ENCODE measurements at regions of chr16 and their contacts with region 1.

Region 1: DNA sequence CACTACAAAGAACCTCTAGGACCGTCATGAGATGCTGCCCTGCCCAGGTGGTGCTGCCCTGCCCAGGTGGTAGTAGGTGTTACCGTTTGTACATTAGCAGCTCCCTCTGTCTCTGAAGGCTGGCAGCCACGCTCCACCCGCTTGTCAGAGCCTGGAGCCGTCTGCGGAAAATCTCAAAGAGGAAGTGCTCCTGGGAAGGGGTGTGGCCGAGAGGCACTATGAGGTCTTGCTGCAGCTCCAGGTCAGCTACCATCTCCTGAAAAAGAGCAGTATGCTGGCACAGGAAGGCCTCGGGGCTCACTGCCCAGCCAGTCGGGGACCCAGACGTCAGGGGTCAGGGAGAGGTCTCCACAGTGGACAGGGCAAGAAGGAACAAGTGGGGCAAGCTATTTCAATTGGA is 28.3 kb downstream of the ZNF276 start:
- DNase-seq: peak in 3 of 5 donors; percentile 28 to 40 (median 39)
- ATAC-seq: peak in 3 of 4 donors; percentile 32 to 42 (median 40)
- H3K4me3 ChIP-seq: no peak overlapping the region
- H3K27ac ChIP-seq: no peak overlapping the region
- H3K4me1 ChIP-seq: peaks cover 0 to 9% (median 0%) of the 10 kb centered on the region in 12 donors
- H3K27me3 ChIP-seq: no peaks in the 10 kb centered on the region
- CTCF ChIP-seq: no peak
- POLR2A ChIP-seq: no peak

Region 2: DNA sequence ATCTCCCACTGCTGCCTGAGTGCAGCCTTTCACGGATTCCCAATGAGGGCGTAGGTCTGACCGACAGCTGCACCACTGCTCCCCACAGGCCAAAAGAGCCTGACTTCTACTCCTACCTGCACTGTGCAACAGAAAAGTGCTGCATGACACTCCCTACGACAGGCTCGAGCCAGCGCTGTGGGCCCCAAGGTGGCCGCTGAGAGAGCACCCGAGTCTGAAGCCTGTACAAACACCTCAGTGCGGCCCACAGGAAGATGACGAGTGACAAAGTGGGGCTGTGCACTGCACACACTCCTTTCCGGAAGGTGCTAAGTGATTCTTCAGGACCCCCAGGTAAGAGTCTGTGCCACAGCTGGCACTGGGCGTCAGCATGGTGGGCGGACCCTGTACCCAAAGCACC is 25.6 kb after region 1 on chr16:
- intact Hi-C with region 1: no loop called
- DNase-seq: no peak
- ATAC-seq: no peak
- H3K4me3 ChIP-seq: no peak overlapping the region
- H3K27ac ChIP-seq: no peak overlapping the region
- H3K4me1 ChIP-seq: no peaks in the 10 kb centered on the region
- H3K27me3 ChIP-seq: no peaks in the 10 kb centered on the region
- CTCF ChIP-seq: no peak
- POLR2A ChIP-seq: no peak

Region 3: DNA sequence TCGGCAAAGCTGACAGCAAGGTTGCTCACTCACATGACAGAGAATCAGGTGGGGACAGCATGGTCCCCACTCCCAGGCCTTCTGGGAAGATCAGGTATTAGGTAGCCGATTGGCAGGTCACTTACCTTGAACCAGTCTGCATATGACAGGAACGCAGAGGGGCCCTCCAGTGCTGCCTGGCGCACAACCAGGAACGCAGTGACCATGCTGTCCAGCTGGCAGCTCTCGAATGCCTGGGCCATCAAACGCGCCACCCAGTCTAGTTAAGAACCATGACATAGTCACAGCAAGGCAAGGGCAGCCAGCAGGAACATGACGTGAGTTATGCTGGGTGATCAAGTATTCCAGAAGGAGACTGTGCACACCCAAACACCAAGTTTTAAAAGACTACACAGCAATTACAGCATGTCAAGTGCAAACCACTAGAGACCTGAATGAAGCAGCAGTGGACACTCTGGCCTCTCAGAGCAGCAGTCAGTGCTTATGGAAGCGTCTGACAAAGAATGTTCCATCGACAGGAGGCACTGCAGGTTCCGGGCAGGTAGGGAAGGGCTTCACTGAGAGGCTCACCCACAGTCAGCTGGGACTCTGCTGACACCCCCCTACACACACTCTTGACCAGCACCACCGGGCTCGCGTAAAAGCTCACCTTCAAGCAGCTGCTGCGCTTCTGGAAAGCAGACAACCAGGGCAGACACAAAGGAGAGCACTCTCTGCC is 41.8 kb after region 1 on chr16:
- intact Hi-C with region 1: loop called in 1 of 10 experiments (anchors 5 kb)
- DNase-seq: no peak
- ATAC-seq: peak in 3 of 4 donors; percentile 22 to 47 (median 41)
- H3K4me3 ChIP-seq: no peak overlapping the region
- H3K27ac ChIP-seq: no peak overlapping the region
- H3K4me1 ChIP-seq: no peaks in the 10 kb centered on the region
- H3K27me3 ChIP-seq: no peaks in the 10 kb centered on the region
- CTCF ChIP-seq: no peak
- POLR2A ChIP-seq: no peak

Region 4: DNA sequence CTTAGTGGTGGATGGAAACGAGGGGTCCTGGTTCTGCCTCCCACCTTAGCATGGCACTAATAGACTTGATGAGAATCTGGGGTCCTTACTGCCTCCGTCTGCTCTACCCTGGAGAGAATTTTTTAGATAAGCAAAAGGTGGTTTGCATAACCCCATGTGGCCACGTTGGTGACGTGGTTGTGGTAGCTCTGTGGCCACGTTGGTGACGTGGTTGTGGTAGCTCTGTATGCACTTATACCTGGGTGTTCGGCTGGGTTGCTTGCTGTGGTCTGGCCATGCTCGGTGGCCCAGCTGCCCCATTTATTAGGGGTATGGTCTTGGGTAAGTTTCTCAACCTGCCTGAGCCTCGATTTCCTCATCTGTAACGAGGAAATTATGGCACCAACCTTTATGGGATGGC is 91.6 kb after region 1 on chr16:
- intact Hi-C with region 1: no loop called
- DNase-seq: peak in 2 of 5 donors; percentile 19 to 47
- ATAC-seq: no peak
- H3K4me3 ChIP-seq: no peak overlapping the region
- H3K27ac ChIP-seq: no peak overlapping the region
- H3K4me1 ChIP-seq: peaks cover 0 to 15% (median 0%) of the 10 kb centered on the region in 12 donors
- H3K27me3 ChIP-seq: no peaks in the 10 kb centered on the region
- CTCF ChIP-seq: no peak
- POLR2A ChIP-seq: no peak

Region 5: GRCh38 chr16:89853306-89853993 is 103.8 kb after region 1 on chr16:
- intact Hi-C with region 1: loop called in 1 of 10 experiments (anchors 10 kb)
- DNase-seq: peak in 1 of 5 donors; percentile 39
- ATAC-seq: no peak
- H3K4me3 ChIP-seq: no peak overlapping the region
- H3K27ac ChIP-seq: no peak overlapping the region
- H3K4me1 ChIP-seq: no peaks in the 10 kb centered on the region
- H3K27me3 ChIP-seq: no peaks in the 10 kb centered on the region
- CTCF ChIP-seq: no peak
- POLR2A ChIP-seq: no peak